Mammary epithelial cell (primary cell): ENCODE measurements at regions of chr11 and their contacts with region 1.

Region 1: GRCh38 chr11:118610804-118611795 is 3.7 kb downstream of the PHLDB1 start:
- DNase-seq: peak; percentile 68
- H3K4me3 ChIP-seq: peak overlapping the region in 1 of 3 experiments; percentile 25
- H3K27ac ChIP-seq: no peak overlapping the region
- H3K4me1 ChIP-seq: peaks cover 29% of the 10 kb centered on the region
- H3K27me3 ChIP-seq: no peaks in the 10 kb centered on the region
- CTCF ChIP-seq: peak; percentile 57 to 85

Region 2: DNA sequence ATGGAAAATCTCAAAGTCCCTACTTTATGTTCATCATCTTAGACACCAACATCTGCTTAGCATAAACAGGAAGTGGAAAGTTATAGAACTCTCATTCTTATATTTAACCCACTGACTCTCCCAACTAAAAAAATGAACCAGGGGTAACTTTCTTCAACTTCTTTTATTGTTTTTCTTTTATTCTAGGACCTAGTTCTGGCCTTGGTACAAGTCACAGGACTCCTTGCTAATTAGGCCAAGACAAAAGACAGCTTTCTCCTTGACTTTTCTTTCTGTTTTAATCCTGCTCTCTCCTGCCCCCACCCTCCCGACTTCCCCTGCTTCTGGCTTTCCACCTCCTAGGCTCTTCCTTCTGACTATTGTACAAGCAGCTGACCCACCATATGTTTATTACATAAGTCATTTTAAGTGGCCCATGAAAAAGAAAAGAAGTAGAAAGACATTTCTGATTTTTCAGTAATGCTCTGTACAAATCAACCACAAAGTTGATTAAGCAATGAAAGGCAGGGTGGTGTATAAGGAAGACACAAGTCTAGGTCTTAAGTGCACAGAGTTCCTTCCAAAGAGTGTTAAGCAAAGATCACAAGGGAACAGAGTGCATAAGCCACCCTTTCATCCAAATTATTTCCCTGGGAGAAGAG is 404.6 kb before region 1 on chr11:
- CTCF ChIA-PET with region 1: interaction called, 12 read pairs
- dilution Hi-C with region 1: no loop called
- in situ Hi-C with region 1: no loop called
- intact Hi-C with region 1: no loop called
- DNase-seq: no peak
- H3K4me3 ChIP-seq: no peak overlapping the region
- H3K27ac ChIP-seq: no peak overlapping the region
- H3K4me1 ChIP-seq: peaks cover 10% of the 10 kb centered on the region
- H3K27me3 ChIP-seq: no peaks in the 10 kb centered on the region
- CTCF ChIP-seq: no peak

Region 3: GRCh38 chr11:118621071-118621783 is 10.1 kb after region 1 on chr11:
- CTCF ChIA-PET with region 1: no interaction called
- dilution Hi-C with region 1: no loop called
- in situ Hi-C with region 1: no loop called
- intact Hi-C with region 1: loop called (anchors 1 kb)
- DNase-seq: peak; percentile 92
- H3K4me3 ChIP-seq: peak overlapping the region; percentile 73 to 82 (median 81)
- H3K27ac ChIP-seq: peak overlapping the region; percentile 75
- H3K4me1 ChIP-seq: peaks cover 73% of the 10 kb centered on the region
- H3K27me3 ChIP-seq: no peaks in the 10 kb centered on the region
- CTCF ChIP-seq: no peak

Region 4: DNA sequence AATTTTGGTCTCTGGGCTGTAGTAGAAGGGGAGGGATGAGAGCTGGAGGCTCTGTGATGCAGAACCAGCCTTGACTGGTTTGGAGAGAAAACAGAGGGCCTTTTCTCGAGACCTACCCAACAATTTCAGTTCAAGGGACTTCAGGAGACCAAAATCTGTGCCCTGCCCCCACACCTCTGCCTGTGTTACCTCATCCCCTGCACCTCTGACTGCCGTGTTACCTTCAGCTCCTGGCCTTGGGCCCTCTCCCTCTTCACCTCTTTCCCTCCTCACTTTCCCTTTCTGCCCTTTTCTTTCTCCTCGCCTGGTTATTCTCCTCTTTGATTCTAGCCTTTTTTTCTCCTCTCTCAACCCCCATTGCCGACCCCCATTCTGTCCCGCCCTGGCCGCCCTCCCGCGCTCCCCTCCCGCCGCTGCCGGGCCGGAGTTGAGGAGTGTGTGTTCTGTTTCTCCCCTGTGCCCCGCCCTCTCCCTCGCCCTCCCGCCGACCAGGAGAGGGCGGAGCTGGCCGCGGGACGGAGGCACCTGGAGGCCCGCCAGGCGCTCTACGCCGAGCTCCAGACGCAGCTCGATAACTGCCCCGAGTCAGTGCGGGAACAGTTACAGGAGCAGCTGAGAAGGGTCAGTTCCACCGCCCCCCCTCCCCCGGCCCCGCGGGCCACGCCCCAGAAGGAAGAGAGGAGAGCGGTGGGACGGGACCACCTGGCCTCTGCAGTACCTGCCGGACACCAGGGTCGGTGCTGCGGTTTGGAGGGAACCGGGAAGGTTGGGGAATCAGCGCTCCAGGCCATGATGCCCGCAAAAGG is 23.5 kb after region 1 on chr11:
- CTCF ChIA-PET with region 1: interaction called, 12 read pairs
- dilution Hi-C with region 1: no loop called
- in situ Hi-C with region 1: no loop called
- intact Hi-C with region 1: no loop called
- DNase-seq: peak; percentile 62
- H3K4me3 ChIP-seq: peak overlapping the region in 1 of 3 experiments; percentile 13
- H3K27ac ChIP-seq: peak overlapping the region; percentile 32
- H3K4me1 ChIP-seq: peaks cover 35% of the 10 kb centered on the region
- H3K27me3 ChIP-seq: no peaks in the 10 kb centered on the region
- CTCF ChIP-seq: peak in 1 of 2 donors; percentile 33

Region 5: DNA sequence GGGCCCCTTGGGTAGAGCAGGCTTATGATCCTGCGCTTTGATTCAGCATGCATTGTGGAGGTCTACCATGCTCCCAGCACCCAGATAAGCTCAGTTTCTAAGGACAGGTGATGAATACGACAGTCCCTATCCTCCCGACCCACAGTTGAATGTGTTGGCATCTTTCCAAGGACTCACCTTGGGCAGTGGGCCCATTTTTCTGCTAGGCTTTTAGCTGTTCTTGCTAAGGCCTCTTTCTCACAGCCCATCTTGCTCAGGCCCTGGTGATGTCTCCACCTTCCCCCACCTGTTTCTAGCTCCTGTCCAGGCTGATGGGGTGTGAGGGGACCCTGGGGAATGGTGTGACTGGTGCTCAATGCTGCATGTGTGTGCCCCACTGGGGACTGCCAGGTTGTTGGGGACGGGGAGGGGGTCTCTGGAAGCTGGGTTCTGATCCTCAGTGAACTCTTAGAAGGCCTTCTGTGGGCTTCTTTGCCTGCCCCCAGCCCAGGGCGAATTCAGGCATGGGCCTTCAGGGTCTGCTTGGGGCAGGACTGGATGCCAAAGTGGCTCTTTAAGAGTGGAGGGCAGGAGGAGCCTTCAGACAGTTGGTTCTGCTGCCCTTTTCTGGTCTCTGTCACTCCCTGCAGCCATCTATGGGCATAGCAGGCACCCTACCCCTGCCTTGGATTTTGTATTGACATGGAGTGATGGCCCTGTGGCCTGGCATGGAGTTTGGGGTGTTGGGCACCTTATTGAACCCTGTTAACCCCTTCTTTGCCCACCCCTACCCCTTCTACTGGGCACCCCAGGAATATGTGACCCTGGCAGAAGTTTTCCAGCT is 29.4 kb after region 1 on chr11:
- CTCF ChIA-PET with region 1: interaction called, 3 read pairs
- dilution Hi-C with region 1: no loop called
- in situ Hi-C with region 1: no loop called
- intact Hi-C with region 1: loop called (anchors 1 kb)
- DNase-seq: no peak
- H3K4me3 ChIP-seq: no peak overlapping the region
- H3K27ac ChIP-seq: no peak overlapping the region
- H3K4me1 ChIP-seq: peaks cover 16% of the 10 kb centered on the region
- H3K27me3 ChIP-seq: no peaks in the 10 kb centered on the region
- CTCF ChIP-seq: peak; percentile 43 to 78

Region 6: DNA sequence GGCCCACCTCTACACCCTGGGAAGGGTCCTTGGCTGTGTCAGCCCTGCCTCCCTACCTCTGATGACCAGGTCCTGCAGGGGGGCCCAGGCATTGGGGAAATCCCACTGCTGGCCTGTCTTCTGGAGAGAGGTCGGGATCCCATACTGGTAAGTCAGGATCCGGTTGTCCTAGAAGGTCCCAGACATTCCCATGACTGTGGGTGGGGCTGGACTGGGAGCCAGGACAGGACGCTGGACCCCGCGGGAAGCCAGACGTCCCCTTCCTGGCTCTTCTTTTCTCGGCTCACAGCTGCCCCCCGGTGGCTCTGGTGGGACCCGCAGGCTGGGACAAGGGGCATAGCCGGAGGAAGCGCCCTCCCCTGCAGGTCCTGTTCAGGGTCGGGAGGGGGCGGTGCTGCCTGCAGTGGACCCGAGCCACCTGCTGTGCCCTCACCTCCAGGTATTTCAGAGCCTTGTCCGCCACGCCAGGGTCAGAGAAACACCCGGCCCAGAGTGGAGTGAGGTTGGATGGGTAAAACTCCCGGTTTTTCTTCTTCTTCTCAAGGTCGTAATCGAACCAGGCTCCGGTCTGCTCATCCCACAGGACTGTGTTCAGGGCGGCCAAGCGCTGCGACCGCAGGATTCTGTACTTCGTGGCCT is 48.3 kb after region 1 on chr11:
- CTCF ChIA-PET with region 1: no interaction called
- dilution Hi-C with region 1: no loop called
- in situ Hi-C with region 1: no loop called
- intact Hi-C with region 1: loop called (anchors 1 kb)
- DNase-seq: peak; percentile 58
- H3K4me3 ChIP-seq: no peak overlapping the region
- H3K27ac ChIP-seq: no peak overlapping the region
- H3K4me1 ChIP-seq: peaks cover 23% of the 10 kb centered on the region
- H3K27me3 ChIP-seq: no peaks in the 10 kb centered on the region
- CTCF ChIP-seq: peak; percentile 81 to 85

Region 7: DNA sequence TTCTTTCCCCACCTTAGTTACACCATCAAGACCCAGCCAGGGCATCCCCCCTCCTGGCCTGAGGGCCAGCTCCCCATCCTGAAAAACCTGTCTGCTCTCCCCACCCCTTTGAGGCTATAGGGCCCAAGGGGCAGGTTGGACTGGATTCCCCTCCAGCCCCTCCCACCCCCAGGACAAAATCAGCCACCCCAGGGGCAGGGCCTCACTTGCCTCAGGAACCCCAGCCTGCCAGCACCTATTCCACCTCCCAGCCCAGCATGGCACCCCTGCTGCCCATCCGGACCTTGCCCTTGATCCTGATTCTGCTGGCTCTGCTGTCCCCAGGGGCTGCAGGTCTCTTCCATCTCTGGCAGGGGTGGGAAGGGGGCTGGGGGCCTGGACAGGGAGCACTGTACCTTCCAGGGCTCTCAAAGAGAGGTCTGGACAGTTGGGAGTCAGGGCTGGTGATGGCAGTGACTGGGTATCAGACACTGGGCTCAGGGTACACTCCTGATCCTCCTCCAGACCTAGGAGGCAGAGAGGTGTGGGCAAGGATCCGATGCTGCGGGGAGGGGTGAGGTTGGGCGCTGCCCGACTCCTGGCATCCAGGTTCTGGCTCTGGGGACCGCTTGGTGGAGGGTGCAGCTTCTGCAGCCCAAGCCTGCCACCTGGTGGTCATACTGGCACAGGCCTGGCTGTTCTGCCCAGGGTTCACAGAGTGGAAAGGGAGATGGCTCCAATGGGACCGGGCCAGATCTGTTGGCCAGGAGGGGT is 345.2 kb after region 1 on chr11 and contains the start of gene UPK2:
- CTCF ChIA-PET with region 1: no interaction called
- dilution Hi-C with region 1: no loop called
- in situ Hi-C with region 1: no loop called
- intact Hi-C with region 1: loop called (anchors 5 kb)
- DNase-seq: peak; percentile 72
- H3K4me3 ChIP-seq: no peak within 1 kb of the TSS
- H3K27ac ChIP-seq: no peak within 1 kb of the TSS
- H3K4me1 ChIP-seq: peaks cover 2% of the 10 kb centered on the region
- H3K27me3 ChIP-seq: no peaks in the 10 kb centered on the region
- CTCF ChIP-seq: peak; percentile 95 to 98
- total RNA-seq, gene UPK2: 0.45 TPM in 1 of 2 donors, not detected in the other